ENCODE measurements at regions of chr5 and their contacts with region 1.

Region 1: GRCh38 chr5:160399402-160400353 is at the start of gene FAM200C:
- DNase-seq: peak; percentile 74
- H3K4me3 Mint-ChIP-seq: peak within 1 kb of the TSS; percentile 90
- H3K27ac Mint-ChIP-seq: peak within 1 kb of the TSS; percentile 54
- H3K4me1 Mint-ChIP-seq: peaks cover 15% of the 10 kb centered on the region
- H3K27me3 Mint-ChIP-seq: no peaks in the 10 kb centered on the region
- total RNA-seq, gene FAM200C: 1.3 and 1.4 TPM in 2 replicates

Region 2: DNA sequence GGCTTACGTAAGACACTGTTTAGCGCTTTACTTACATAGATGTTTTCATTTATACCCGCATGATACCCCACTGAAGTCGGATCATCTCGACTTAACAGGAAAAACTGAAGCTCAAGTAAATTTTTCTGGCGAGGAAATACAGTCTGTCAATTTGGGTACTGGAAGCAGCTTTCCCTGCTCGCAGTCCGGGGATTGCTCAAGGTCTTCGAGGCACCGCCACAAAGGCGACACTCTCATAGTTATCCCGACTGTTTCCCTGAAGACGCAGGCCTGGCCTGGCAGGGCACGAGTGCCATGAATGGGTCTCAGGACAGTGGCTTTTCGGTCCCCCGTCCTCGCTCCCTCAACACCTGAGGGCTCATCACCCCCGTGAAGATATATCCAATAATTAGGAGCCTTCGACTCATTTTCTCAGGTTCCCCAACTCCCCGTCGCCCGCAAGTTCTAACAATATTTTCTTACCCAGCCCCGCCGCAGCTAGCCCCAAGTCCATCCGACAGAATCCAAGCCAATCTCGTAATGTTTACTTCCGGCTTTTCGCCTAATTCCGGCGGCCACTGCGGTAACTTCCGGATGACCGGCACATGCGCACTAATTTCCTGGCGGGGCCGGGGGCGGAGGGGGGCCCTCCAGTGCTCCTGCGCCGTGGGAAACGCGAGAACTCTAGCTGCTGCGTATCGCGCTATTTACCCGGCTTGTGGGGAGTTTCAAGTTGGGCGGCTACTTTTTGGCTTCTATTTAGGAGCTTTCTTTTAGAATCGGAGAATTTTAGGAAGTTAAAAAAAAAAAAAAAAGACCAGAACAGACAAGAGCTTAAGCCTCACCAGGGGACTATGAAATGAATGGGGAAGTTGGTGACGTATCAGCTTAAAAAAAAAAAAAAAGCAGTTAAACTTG is 19.1 kb after region 1 on chr5 and contains the start of gene SLU7:
- intact Hi-C with region 1: loop called (anchors 1 kb)
- DNase-seq: peak; percentile 91
- H3K4me3 Mint-ChIP-seq: peak within 1 kb of the TSS; percentile 96
- H3K27ac Mint-ChIP-seq: peak within 1 kb of the TSS; percentile 93
- H3K4me1 Mint-ChIP-seq: peaks cover 56% of the 10 kb centered on the region
- H3K27me3 Mint-ChIP-seq: no peaks in the 10 kb centered on the region
- total RNA-seq, gene SLU7: 41.3 and 44.3 TPM in 2 replicates

Region 3: GRCh38 chr5:160760008-160760407 is 360.3 kb after region 1 on chr5:
- intact Hi-C with region 1: no loop called
- DNase-seq: no peak
- H3K4me3 Mint-ChIP-seq: no peak overlapping the region
- H3K27ac Mint-ChIP-seq: no peak overlapping the region
- H3K4me1 Mint-ChIP-seq: peaks cover 2% of the 10 kb centered on the region
- H3K27me3 Mint-ChIP-seq: peaks cover 9% of the 10 kb centered on the region

Measured in activated T-helper 2 cell treated with anti-CD3 and anti-CD28 coated beads, Interferon-gamma antibody, Interleukin-2, Interleukin-4, amounts not matched to agents 10 μg/mL and 5 μg/mL and 100 μg/mL, durations not matched to agents 14 hours and 24 hours and 36 hours (primary cell).